Ascending aorta (tissue), 2 donors: ENCODE measurements at regions of chr12 and their contacts with region 1.

Region 1: DNA sequence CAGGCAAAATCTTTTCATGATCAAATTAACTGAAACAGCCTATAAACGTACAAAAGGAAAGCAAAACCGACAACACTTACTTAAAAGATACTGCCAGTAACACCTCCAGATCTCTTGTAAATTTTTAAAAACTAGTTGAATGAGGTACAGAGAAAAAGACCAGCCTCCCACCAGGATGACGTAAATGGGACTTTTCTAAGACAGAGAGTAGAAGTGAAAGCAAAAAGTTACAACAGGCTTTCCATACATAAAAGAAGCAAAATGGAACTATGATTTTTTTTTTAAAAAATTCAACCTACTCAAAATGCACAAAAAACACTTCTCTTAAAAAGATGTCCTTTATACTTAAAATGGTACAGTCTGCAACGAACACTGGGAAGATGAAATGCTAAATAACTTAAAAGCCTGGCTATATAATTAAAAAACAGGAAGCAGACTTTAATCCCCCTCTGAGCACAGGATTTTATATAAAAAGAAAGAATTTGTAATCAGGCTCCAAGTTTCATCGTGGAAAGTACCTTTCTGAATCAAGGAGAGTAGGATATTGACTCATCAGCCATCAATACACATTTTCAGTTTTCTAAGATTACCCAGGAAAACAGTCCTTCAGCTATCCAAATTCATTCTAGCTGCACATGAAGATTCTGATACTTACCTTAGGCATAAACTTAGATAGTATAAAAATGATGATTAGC is 14.2 kb upstream of the MYO1A start:
- DNase-seq: no peak
- H3K4me3 ChIP-seq: no peak overlapping the region
- H3K27ac ChIP-seq: no peak overlapping the region
- H3K4me1 ChIP-seq: no peaks in the 10 kb centered on the region
- H3K27me3 ChIP-seq: no peaks in the 10 kb centered on the region
- CTCF ChIP-seq: no peak

Region 2: DNA sequence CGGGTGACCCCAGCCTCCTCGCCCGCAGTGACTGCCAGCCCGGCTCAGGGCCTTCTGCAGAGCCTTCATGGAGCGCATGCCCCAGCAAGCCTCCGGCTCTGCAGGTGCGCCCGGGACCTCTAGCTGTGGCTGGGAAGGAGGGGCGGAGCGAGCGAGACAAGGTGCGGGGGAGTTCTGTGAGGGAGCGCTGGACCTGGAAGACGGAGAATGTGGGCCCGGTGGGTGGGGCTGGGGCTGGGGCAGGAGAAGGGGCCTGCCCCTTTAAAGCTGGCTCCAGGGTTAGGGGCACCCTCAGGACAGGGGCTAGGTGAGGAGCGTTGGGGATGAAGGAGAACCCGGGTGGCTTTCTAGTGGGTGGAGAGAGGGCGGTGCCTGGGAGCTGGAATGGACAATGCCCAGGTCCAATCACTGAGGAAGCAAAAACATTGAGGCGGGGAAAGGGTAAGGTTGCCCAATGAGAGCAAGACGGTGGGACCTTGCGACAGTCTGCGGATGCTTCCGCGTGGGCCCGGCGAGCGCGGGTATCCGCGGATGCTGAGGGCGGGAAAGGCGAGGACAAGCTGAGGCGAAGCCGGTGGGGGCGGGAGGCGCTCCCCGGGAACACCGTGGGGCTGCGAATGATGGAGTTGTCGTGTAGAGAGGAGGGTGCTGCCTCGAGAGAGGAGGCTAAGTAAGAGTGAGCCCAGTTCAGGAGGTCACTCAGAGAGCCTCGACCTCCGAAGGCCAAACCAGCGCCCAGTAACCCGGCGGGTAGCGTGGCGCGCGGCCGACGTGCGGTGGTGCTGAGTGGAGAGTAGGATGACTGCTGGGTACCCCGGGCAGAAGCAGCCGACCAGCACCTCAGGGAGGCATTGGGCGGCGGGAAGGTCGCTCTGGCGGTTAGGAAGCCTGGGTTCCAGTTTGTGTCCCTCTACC is 575.8 kb before region 1 on chr12 and contains the start of gene GLS2:
- intact Hi-C with region 1: no loop called
- DNase-seq: peak in 1 of 2 donors; percentile 85
- H3K4me3 ChIP-seq: peak within 1 kb of the TSS; percentile 54 to 83
- H3K27ac ChIP-seq: no peak within 1 kb of the TSS
- H3K4me1 ChIP-seq: peaks cover 3% of the 10 kb centered on the region in 2 donors
- H3K27me3 ChIP-seq: no peaks in the 10 kb centered on the region
- CTCF ChIP-seq: no peak
- total RNA-seq, gene GLS2: not detected

Region 3: GRCh38 chr12:57005980-57006808 is 57.9 kb before region 1 on chr12 and contains the start of gene ZBTB39:
- intact Hi-C with region 1: loop called (anchors 5 kb)
- DNase-seq: peak in 1 of 2 donors; percentile 78
- H3K4me3 ChIP-seq: peak within 1 kb of the TSS; percentile 88 to 100
- H3K27ac ChIP-seq: peak within 1 kb of the TSS; percentile 81 to 85
- H3K4me1 ChIP-seq: peaks cover 0 to 7% of the 10 kb centered on the region in 2 donors
- H3K27me3 ChIP-seq: no peaks in the 10 kb centered on the region
- CTCF ChIP-seq: peak; percentile 36 to 58 (median 47)
- total RNA-seq, gene ZBTB39: 5.9 TPM

Region 4: GRCh38 chr12:57016318-57016717 is 47.8 kb before region 1 on chr12 and contains the start of gene TAC3:
- intact Hi-C with region 1: no loop called
- DNase-seq: no peak
- H3K4me3 ChIP-seq: no peak within 1 kb of the TSS
- H3K27ac ChIP-seq: no peak within 1 kb of the TSS
- H3K4me1 ChIP-seq: no peaks in the 10 kb centered on the region
- H3K27me3 ChIP-seq: peaks cover 4% of the 10 kb centered on the region
- CTCF ChIP-seq: no peak
- total RNA-seq, gene TAC3: not detected

Region 5: GRCh38 chr12:57101844-57102695 is 37.9 kb after region 1 on chr12:
- intact Hi-C with region 1: no loop called
- DNase-seq: peak in 1 of 2 donors; percentile 58
- H3K4me3 ChIP-seq: no peak overlapping the region
- H3K27ac ChIP-seq: no peak overlapping the region
- H3K4me1 ChIP-seq: no peaks in the 10 kb centered on the region
- H3K27me3 ChIP-seq: no peaks in the 10 kb centered on the region
- CTCF ChIP-seq: no peak